ENCODE measurements at regions of chr2 and their contacts with region 1.

Region 1: GRCh38 chr2:130873700-130874346 is 37.1 kb downstream of the ARHGEF4 start:
- DNase-seq: no peak
- H3K4me3 ChIP-seq: no peak overlapping the region
- CTCF ChIP-seq: peak; percentile 76

Region 2: DNA sequence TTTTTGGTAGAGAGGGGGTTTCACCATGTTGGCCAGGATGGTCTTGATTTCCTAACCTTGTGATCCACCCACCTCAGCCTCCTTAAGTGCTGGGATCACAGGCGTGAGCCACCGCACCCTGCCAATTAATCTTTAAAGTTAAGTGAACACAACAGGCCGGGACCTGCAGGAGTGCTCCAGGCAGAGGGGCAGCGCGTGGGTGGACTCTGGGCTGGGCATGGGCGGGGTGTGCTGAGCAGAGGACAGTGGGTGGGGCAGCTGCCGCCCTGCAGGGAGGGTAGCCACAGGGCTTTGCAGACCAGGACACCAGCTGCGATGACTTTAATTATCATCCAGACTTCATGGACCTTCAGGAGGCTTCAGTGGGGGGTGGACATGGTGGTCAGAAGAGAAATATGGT is 153.8 kb before region 1 on chr2:
- CTCF ChIA-PET with region 1: no interaction called
- POLR2A ChIA-PET with region 1: no interaction called
- DNase-seq: no peak
- H3K4me3 ChIP-seq: no peak overlapping the region
- CTCF ChIP-seq: no peak

Region 3: GRCh38 chr2:130797493-130798435 is 76.1 kb before region 1 on chr2:
- CTCF ChIA-PET with region 1: interaction called, 253 read pairs
- POLR2A ChIA-PET with region 1: interaction called, 3 read pairs
- DNase-seq: peak; percentile 21
- H3K4me3 ChIP-seq: peak overlapping the region; percentile 80
- CTCF ChIP-seq: peak; percentile 98

Region 4: GRCh38 chr2:130884503-130884902 is 10.7 kb after region 1 on chr2:
- CTCF ChIA-PET with region 1: interaction called, 25 read pairs
- POLR2A ChIA-PET with region 1: interaction called, 3 read pairs
- DNase-seq: no peak
- H3K4me3 ChIP-seq: no peak overlapping the region
- CTCF ChIP-seq: no peak

Measured in AG04449 (cell line).